ENCODE measurements at regions of chr16 and their contacts with region 1.

Region 1: GRCh38 chr16:2251483-2252240 is at the start of gene ECI1:
- DNase-seq: peak; percentile 91
- H3K4me3 ChIP-seq: peak within 1 kb of the TSS; percentile 67 to 95 (median 75)
- H3K27ac ChIP-seq: peak within 1 kb of the TSS; percentile 38
- H3K4me1 ChIP-seq: peaks cover 13% of the 10 kb centered on the region
- H3K27me3 ChIP-seq: no peaks in the 10 kb centered on the region
- CTCF ChIP-seq: peak; percentile 58 to 78
- POLR2A ChIP-seq: peak; percentile 86
- total RNA-seq, gene ECI1: 43.6 and 45.8 TPM in 2 replicates

Region 2: GRCh38 chr16:2023098-2023925 is 228.3 kb before region 1 on chr16:
- CTCF ChIA-PET with region 1: interaction called, 10 read pairs
- POLR2A ChIA-PET with region 1: no interaction called
- dilution Hi-C with region 1: no loop called
- intact Hi-C with region 1: no loop called
- DNase-seq: peak; percentile 92
- H3K4me3 ChIP-seq: peak overlapping the region in 2 of 3 experiments; percentile 20 to 24
- H3K27ac ChIP-seq: peak overlapping the region; percentile 56
- H3K4me1 ChIP-seq: peaks cover 27% of the 10 kb centered on the region
- H3K27me3 ChIP-seq: peaks cover 4 to 11% of the 10 kb centered on the region in 2 experiments
- CTCF ChIP-seq: peak; percentile 94 to 96
- POLR2A ChIP-seq: peak; percentile 37

Region 3: DNA sequence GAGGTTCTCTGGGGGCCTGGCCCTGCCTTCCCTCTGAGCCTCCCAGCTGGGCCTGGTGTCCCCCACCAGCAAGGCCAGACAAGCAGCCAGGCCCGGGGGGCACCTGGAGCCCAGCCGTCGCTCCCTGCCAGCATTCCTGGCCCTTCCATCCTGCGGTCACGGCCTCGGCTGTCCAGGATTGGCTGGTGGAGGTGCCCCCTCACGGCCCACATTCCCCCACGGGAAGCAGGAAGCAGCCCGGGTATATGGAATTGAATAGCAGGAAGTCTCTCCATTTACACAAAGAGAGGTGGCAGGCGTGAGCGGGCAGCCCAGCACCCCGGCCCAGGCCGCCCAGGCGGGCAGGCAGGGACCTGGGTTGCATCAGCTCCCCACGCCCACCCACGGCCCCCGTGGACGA is 81.6 kb before region 1 on chr16:
- CTCF ChIA-PET with region 1: interaction called, 7 read pairs
- POLR2A ChIA-PET with region 1: no interaction called
- dilution Hi-C with region 1: no loop called
- intact Hi-C with region 1: loop called (anchors 2 kb)
- DNase-seq: peak; percentile 95
- H3K4me3 ChIP-seq: peak overlapping the region; percentile 40 to 71 (median 57)
- H3K27ac ChIP-seq: peak overlapping the region; percentile 99
- H3K4me1 ChIP-seq: peaks cover 24% of the 10 kb centered on the region
- H3K27me3 ChIP-seq: no peaks in the 10 kb centered on the region
- CTCF ChIP-seq: peak in 1 of 2 donors; percentile 2
- POLR2A ChIP-seq: peak; percentile 91

Region 4: DNA sequence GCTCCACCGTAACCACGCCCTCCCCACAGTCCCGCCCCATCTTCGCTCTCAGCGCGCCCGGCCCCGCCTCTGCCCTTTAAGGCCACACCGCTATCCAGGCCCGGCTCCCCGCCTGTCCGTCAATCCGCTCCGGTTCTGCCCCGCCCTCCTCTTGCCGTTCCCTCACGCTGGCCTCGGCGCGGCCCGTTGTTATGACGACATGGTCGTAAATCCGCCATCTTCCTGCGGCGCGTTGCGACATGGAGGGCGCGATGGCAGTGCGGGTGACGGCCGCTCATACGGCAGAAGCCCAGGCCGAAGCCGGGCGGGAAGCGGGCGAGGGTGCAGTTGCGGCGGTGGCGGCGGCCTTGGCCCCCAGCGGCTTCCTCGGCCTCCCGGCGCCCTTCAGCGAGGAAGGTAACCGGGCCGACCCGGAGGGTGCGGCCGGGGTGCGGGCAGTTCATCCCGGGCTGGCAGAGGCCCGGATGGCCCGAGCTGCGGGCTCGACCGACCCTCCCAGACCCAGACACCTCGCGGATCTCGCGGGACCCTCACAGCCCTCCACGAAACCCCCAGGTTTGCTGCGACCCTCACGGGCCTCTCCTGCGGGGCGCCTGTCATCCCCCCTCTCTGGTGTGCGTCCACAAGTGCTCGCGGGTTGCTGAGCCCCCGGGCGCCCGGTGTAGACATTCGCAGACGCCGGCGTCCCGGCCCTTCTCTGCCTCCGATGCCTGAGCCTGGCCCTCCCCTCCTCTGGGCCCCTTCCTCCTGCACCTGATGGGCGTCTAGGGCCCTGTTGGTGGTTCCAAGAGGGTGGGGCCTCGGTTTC is 28.1 kb before region 1 on chr16 and contains the start of gene E4F1:
- CTCF ChIA-PET with region 1: interaction called, 7 read pairs
- POLR2A ChIA-PET with region 1: no interaction called
- dilution Hi-C with region 1: no loop called
- intact Hi-C with region 1: loop called (anchors 2 kb)
- DNase-seq: peak; percentile 99
- H3K4me3 ChIP-seq: peak within 1 kb of the TSS; percentile 54 to 79 (median 74)
- H3K27ac ChIP-seq: peak within 1 kb of the TSS; percentile 41
- H3K4me1 ChIP-seq: peaks cover 7% of the 10 kb centered on the region
- H3K27me3 ChIP-seq: no peaks in the 10 kb centered on the region
- CTCF ChIP-seq: no peak
- POLR2A ChIP-seq: peak; percentile 96
- total RNA-seq, gene E4F1: 31.9 and 32.7 TPM in 2 replicates

Region 5: DNA sequence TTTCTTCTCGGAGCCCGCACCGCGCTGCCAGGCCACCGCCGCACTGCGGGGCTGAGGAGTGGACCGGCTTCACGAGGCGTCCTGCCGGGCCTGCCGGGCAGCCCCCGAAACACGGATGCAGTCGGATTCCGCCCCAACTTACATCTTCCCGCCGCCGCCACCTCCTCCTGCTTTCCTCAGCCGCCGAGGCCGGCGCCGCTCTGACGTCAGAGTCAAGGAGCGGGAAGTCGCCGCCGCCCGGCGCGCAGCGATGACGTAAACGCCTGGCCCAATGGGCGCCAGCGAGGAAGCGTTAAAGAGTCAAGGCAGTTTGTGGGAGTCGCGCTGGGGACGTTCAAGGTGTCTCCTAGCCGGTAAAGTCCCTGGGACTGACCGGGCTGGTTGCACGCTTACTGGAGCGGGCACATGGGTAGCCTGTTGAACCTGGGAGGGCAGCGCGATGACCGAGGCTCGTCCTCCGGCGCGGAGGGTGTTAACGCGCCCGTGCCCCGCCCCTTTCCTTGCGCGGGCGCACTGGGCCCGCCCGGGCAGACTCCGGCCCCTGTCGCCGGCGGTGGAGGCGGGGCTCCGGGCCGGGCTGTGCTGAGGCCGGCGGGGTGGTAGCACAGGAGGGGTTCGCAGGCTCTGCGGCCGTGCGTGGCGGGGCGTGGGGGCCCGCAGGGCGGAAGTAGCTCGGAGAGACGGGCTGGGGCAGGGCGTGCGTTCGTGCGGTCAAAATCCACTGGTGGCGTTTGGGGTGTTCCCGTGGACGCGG is 16.4 kb after region 1 on chr16 and contains the start of gene RNPS1:
- CTCF ChIA-PET with region 1: interaction called, 12 read pairs
- POLR2A ChIA-PET with region 1: interaction called, 6 read pairs
- dilution Hi-C with region 1: no loop called
- intact Hi-C with region 1: loop called (anchors 1 kb)
- DNase-seq: peak; percentile 96
- H3K4me3 ChIP-seq: peak within 1 kb of the TSS; percentile 16 to 73 (median 44)
- H3K27ac ChIP-seq: peak within 1 kb of the TSS; percentile 78
- H3K4me1 ChIP-seq: peaks cover 9% of the 10 kb centered on the region
- H3K27me3 ChIP-seq: no peaks in the 10 kb centered on the region
- CTCF ChIP-seq: no peak
- POLR2A ChIP-seq: peak; percentile 85
- total RNA-seq, gene RNPS1: 204 and 209 TPM in 2 replicates

Region 6: GRCh38 chr16:2288726-2289125 is 37.1 kb after region 1 on chr16:
- CTCF ChIA-PET with region 1: no interaction called
- POLR2A ChIA-PET with region 1: no interaction called
- dilution Hi-C with region 1: no loop called
- intact Hi-C with region 1: no loop called
- DNase-seq: no peak
- H3K4me3 ChIP-seq: no peak overlapping the region
- H3K27ac ChIP-seq: no peak overlapping the region
- H3K4me1 ChIP-seq: no peaks in the 10 kb centered on the region
- H3K27me3 ChIP-seq: no peaks in the 10 kb centered on the region
- CTCF ChIP-seq: no peak
- POLR2A ChIP-seq: no peak

Region 7: DNA sequence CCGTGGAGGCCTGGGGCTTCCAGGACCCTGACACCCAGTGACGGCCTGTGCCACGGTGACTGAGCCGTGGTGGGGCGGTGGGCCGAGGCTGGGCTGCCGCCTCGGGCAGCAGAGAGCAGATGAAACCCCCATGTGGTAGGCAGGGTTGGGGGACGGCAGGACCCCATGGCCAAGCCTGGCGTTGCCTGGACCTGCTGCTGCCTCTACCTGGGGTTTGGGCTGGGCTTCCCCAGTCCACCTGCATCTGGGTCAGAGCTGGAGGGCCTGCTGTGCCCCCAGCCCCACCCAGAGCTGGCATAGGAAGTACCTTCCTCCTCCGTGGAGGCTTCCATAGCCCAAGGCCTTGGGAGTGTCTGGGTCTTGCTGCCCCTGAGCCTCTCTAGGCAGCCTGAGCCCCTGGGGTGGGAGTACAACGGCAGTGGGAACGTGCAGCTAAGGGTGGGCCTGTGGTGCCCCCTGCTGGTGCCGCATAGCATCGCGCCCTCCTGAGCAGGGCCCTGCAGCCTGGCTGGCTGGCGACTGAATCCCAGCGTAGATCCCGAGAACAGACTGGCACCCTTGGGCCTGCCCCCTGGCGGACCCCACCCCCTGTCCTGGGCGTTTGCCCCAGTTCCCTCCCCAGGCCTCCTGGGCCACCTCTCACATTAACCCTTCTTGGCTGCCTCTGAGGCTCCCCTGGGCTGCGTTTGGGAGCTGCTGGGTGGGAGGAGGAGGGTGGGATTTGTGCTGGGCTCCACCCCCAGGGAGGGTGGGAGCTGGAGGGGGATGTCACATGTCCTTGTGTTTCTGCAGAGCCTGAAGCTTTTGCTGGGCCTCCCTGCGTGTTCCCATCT is 249.5 kb after region 1 on chr16:
- CTCF ChIA-PET with region 1: interaction called, 17 read pairs
- POLR2A ChIA-PET with region 1: no interaction called
- dilution Hi-C with region 1: no loop called
- intact Hi-C with region 1: no loop called
- DNase-seq: peak; percentile 84
- H3K4me3 ChIP-seq: peak overlapping the region in 1 of 3 experiments; percentile 20
- H3K27ac ChIP-seq: no peak overlapping the region
- H3K4me1 ChIP-seq: no peaks in the 10 kb centered on the region
- H3K27me3 ChIP-seq: no peaks in the 10 kb centered on the region
- CTCF ChIP-seq: peak; percentile 96 to 99
- POLR2A ChIP-seq: no peak

Region 8: DNA sequence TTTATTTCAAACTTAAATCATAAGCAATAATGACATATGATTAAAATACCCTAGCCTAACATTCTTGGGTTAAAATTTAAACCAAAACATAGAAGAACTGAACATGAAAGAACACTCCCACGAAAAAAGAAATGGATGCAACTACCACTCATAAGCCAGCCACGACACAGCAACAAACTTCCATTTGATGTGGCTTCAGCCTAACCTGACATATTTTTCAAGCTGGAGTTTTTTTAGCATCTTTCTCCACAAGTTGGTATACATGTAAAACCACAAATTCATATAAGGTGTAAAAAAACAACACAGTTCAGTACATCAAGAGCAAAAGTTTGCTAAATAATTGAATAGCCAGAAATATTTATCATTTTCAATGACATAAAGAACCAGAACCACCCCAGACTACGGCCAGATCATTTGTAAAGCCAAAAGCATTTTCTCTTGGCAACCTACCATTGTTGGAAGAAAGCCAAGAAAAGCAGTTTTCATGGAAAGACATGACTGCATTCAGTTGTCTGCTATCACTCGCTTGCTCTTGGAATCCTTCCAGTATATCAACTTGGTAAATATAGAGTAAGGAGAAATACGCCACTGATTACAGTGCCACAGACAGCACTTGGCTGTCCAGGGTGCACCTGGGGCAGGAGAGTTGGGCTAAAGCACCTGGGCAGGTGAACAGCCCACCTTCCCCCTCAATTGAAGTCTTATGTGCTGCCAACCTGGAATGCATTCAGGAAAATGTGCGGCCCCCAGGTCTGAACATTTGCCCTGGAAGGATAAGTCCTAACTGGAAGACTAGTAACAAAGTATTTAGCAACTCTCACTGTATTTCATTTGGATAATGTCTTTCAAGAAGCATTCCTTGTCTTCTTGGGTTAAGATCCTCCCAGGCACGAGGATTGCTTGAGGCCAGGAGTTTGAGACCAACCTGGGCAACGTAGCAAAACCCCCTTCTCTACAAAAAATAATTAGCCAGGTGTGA is 1568.4 kb after region 1 on chr16:
- CTCF ChIA-PET with region 1: no interaction called
- POLR2A ChIA-PET with region 1: no interaction called
- dilution Hi-C with region 1: no loop called
- intact Hi-C with region 1: no loop called
- DNase-seq: peak; percentile 98
- H3K4me3 ChIP-seq: no peak overlapping the region
- H3K27ac ChIP-seq: peak overlapping the region; percentile 46
- H3K4me1 ChIP-seq: peaks cover 25% of the 10 kb centered on the region
- H3K27me3 ChIP-seq: no peaks in the 10 kb centered on the region
- CTCF ChIP-seq: no peak
- POLR2A ChIP-seq: no peak